ENCODE measurements at regions of chr3 and their contacts with region 1.

Region 1: DNA sequence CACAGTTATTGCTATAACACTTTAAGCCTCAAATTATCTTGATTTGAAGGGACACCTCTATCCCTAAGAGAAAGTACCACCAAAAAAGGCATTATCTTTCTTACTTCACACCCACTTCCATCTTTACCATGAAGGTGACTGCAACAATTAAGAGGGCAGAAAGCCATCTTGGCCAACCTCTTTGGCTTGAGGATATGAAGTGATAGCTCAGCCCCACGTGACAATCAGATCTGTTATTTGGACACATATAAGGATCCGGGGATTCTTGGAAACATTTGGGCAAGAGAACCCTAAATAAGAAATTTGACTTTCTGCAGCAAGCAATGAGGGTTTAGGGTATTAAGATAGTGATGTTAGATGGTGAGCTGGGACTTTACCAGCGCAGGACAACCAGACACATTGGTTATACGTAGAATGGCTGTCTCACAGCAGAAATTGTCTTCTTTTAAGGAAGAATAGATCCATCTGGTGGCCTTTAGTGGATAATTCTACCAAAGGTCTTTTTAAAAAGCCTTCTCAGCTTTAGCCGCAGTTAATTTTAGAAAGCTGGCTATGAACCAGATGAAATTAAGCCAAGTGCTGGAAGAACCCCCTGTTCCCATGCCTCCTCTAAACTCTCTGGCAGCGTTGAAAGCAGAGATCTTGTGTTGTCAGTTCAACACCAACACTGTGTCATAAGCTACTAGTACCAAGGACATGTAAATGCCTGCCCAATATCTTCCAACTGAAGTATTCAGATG is 12.3 kb downstream of the HCLS1 start:
- DNase-seq: no peak
- ATAC-seq: peak; percentile 84 to 99 (median 99)
- H3K4me3 ChIP-seq: no peak overlapping the region
- H3K27ac ChIP-seq: peak overlapping the region; percentile 48
- H3K4me1 ChIP-seq: peaks cover 14% of the 10 kb centered on the region
- H3K27me3 ChIP-seq: no peaks in the 10 kb centered on the region
- CTCF ChIP-seq: peak; percentile 7

Region 2: DNA sequence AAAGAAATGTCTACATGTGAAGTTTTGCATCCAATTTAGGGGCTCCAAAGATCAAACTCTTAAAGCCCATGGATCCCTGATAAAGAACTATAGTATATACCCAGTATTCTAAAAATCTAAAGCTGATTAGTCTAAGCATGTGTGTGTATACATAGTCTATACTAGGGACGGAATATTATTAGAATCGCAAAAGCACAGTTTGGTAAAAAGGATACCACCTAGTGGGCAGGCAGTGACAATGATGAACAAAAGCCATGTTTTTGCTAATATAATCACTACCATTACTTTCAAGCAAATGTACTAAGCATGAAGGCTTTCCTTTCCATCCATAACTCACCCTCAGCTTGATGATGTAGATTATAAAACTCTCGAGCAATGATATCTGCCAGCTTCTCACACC is 119.1 kb before region 1 on chr3:
- intact Hi-C with region 1: no loop called
- DNase-seq: no peak
- ATAC-seq: no peak
- H3K4me3 ChIP-seq: no peak overlapping the region
- H3K27ac ChIP-seq: no peak overlapping the region
- H3K4me1 ChIP-seq: no peaks in the 10 kb centered on the region
- H3K27me3 ChIP-seq: no peaks in the 10 kb centered on the region
- CTCF ChIP-seq: no peak

Region 3: GRCh38 chr3:121552379-121552778 is 96.0 kb before region 1 on chr3:
- intact Hi-C with region 1: loop called (anchors 5 to 10 kb)
- DNase-seq: no peak
- ATAC-seq: no peak
- H3K4me3 ChIP-seq: peak overlapping the region; percentile 29
- H3K27ac ChIP-seq: no peak overlapping the region
- H3K4me1 ChIP-seq: no peaks in the 10 kb centered on the region
- H3K27me3 ChIP-seq: no peaks in the 10 kb centered on the region
- CTCF ChIP-seq: no peak

Region 4: DNA sequence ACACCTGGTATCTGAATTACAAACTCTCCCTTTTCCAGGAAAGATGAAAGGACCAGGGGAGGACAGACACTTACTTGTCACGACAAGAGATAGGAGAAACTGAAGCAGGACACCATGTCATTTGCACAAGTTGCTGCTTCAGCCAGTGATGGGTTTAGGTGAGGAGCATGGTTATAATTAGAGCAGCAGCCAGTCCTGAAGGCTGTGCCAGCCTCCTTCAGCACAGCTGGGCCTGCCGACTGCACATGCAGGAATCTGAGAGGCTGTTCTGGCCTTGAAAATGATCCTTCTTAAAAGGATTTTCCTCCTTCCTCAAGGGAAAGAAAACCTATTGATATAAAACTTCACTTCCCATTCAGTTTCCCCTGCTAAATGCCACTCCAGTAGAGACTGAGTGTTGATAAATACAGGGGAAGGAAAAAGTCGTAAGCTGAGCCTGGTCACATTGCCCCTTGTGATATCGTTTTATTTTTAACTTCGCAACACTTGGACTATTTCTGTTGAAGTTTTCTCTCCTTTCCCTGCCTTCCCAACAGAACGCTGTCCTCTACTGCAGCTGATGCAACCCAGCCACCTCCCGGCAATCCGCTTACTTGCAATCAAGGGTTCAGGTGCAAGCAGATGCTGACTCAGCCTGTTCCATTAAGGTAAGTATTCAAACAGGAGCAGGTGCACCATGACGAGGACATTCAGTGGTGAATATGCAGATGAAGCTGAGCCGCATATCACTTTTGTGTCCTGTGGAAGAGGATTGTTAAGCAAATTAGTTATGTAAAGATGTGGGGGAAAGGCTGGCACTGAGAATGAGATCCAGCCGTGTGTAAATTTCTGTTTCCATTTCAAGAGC is 55.3 kb before region 1 on chr3 and contains the start of gene FBXO40:
- intact Hi-C with region 1: loop called in 1 of 2 experiments (anchors 5 kb)
- DNase-seq: peak; percentile 31 to 78
- ATAC-seq: peak; percentile 88 to 91 (median 88)
- H3K4me3 ChIP-seq: peak within 1 kb of the TSS; percentile 63
- H3K27ac ChIP-seq: peak within 1 kb of the TSS; percentile 94
- H3K4me1 ChIP-seq: peaks cover 22% of the 10 kb centered on the region
- H3K27me3 ChIP-seq: no peaks in the 10 kb centered on the region
- CTCF ChIP-seq: no peak
- total RNA-seq, gene FBXO40: 33.0 to 152 (median 62.6) TPM